GM13976 (cell line): ENCODE measurements at regions of chr15 and their contacts with region 1.

Region 1: DNA sequence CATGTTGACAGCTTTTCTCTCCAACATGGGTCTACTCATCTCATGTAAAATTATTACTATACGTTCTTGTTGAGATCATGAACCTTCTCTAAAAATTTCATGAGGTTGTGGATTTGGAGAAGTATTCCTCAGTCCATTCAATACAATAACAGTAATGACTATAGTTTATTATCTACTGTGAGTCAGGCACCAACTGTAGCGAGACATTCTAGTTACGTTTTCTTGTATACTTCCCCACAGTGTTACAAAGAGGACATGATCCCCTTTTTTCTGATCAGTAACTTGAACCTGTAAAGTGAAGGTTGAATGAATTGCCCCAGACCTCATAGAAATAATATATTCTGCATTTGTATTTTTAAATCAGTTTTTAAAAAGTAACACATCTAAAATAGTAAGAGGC is 76.4 kb downstream of the AKAP13 start:
- DNase-seq: no peak
- CTCF ChIP-seq: no peak

Region 2: GRCh38 chr15:85289677-85290365 is 167.0 kb before region 1 on chr15:
- in situ Hi-C with region 1: no loop called
- DNase-seq: peak; percentile 51
- CTCF ChIP-seq: peak; percentile 48

Region 3: GRCh38 chr15:85407804-85408746 is 48.7 kb before region 1 on chr15:
- in situ Hi-C with region 1: loop called (anchors 10 kb)
- DNase-seq: peak; percentile 52
- CTCF ChIP-seq: no peak